ENCODE measurements at regions of chr12 and their contacts with region 1.

Region 1: GRCh38 chr12:68610370-68611093 is at the start of gene RAP1B:
- DNase-seq: peak; percentile 92
- H3K4me3 Mint-ChIP-seq: peak within 1 kb of the TSS; percentile 94
- H3K27ac Mint-ChIP-seq: peak within 1 kb of the TSS; percentile 98
- H3K4me1 Mint-ChIP-seq: peaks cover 37% of the 10 kb centered on the region
- H3K27me3 Mint-ChIP-seq: no peaks in the 10 kb centered on the region
- total RNA-seq, gene RAP1B: 211 to 213 TPM

Region 2: DNA sequence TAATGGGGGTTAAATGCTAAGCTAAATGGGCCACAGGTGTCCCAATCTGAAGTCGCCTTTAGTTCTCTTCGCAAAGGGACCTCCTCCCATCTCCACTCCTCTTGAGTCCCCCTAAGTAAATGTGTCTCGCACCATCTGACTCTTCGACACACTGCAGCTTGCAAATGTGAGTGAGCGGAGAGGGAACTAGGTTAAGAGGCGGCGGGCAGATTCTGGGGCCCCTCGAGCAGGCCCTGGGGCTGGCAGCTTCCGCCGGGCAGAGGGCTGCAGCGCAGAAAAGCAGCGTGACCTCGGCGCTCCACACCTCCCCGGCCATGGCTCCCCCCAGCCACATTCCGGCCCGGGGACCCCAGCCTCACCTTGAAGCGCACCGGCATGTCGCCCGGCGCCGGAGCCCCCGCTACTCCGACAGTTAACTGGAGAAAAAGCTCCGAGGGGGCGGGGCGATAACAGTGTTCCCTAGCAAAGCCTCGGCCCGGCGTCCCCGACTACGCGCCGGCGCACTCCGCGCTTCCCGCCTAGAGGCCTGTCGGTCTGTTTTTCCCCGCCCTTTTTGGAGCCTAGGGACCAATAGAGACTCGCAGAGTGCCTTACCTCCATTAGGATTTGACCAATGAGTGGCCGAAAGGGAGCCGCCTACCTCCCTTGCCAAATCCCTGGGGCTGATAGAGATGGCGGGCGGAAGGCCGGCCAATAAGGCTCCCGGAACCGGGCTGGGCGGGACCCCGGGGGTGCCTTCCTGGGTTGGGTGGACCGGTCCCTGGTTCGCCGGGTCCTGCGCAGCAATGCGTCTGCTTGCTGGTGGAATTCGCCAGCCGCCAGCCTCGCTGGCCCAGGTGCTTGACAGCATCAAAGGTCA is 278.4 kb before region 1 on chr12 and contains the start of gene MDM1:
- CTCF ChIA-PET with region 1: interaction called, 3 read pairs
- POLR2A ChIA-PET with region 1: interaction called, 3 read pairs
- intact Hi-C with region 1: loop called (anchors 1 kb)
- DNase-seq: peak; percentile 97
- H3K4me3 Mint-ChIP-seq: peak within 1 kb of the TSS; percentile 85
- H3K27ac Mint-ChIP-seq: peak within 1 kb of the TSS; percentile 71
- H3K4me1 Mint-ChIP-seq: peaks cover 31% of the 10 kb centered on the region
- H3K27me3 Mint-ChIP-seq: peaks cover 2% of the 10 kb centered on the region
- total RNA-seq, gene MDM1: 13.8 to 15.6 TPM

Region 3: GRCh38 chr12:68342966-68343365 is 267.6 kb before region 1 on chr12:
- CTCF ChIA-PET with region 1: no interaction called
- POLR2A ChIA-PET with region 1: no interaction called
- intact Hi-C with region 1: no loop called
- DNase-seq: no peak
- H3K4me3 Mint-ChIP-seq: no peak overlapping the region
- H3K27ac Mint-ChIP-seq: no peak overlapping the region
- H3K4me1 Mint-ChIP-seq: peaks cover 4% of the 10 kb centered on the region
- H3K27me3 Mint-ChIP-seq: peaks cover 9% of the 10 kb centered on the region

Region 4: DNA sequence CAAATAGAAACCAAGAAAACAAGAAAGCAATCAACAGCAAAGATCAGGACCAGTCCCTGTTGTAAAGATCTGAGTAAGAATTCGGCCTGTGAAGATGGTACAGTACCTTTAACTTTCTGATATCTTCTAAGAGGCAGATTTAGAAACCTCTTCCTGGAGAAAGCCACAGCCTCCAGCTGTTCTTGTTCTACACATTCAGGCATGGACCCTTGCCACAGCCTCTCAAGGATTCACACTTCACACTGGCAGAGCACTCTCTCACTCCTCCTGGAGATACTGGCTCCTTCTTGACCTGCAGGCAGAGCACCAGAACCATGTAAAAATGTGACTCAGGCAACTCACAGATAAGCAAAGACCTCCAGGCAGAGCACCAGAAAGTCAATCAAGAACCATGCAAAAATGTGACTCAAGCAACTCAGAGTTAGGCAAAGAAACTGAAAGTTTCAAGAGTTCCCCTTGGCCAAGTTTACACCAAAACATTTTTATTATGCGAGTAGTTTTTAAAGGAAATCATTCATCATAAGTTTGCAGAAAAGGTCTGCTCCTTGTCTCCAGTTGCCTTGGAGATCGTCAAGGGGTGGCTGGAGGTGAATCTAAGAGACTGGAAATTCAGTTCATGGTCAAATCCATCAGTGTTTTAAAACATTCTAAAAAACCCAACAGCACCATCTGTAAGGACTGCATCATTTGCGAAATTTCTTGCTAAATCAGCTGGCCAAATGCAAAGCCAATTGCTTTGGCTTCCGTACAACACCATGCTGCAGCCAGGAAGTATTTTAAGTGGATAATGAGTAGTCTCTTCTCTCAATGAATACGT is 159.1 kb before region 1 on chr12:
- CTCF ChIA-PET with region 1: interaction called, 4 read pairs
- POLR2A ChIA-PET with region 1: interaction called, 8 read pairs
- intact Hi-C with region 1: loop called (anchors 1 kb)
- DNase-seq: peak; percentile 70
- H3K4me3 Mint-ChIP-seq: peak overlapping the region; percentile 33
- H3K27ac Mint-ChIP-seq: peak overlapping the region; percentile 95
- H3K4me1 Mint-ChIP-seq: peaks cover 85% of the 10 kb centered on the region
- H3K27me3 Mint-ChIP-seq: no peaks in the 10 kb centered on the region

Region 5: DNA sequence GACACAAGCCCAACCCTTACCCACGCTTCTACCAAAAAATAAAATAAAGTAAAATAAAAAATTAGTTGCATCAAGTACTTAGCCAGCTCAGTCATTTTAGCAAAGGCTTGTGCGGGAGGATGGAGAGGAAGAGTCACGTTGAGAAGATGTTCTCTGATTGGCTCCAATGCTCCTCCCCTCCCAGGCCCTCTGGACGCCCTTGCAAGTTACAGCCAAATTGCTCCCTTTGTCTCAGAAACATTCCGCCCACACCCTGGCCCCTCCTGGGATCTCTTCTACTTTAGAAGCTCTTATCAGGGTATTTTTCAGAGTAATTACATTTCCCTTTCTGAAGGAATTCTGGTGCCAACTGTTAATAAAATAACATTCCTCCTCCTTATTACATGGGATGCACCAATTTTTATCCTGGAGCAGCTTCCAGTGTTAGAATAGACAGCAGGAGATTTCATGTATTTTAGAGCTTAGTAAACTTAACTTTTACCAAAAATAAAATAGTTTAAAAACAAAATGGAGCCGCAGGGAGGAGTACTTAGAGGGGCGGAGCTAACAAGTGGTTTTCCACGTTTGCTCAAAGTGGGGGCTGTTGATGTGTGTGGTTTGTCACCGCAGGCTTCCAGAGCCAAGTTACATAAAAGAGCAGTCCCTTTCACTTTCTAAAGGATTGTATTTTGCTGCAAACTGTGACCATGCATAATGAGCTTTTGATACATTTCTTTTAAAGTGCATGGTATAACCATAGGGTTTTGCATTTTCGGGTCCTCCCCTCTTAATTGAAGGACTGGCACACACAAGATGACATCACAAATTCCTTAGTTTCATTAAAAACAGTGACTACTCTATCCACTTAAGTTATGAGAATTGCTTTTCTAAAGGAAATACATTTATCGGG is 71.6 kb before region 1 on chr12:
- CTCF ChIA-PET with region 1: no interaction called
- POLR2A ChIA-PET with region 1: interaction called, 3 read pairs
- intact Hi-C with region 1: loop called (anchors 1 kb)
- DNase-seq: peak; percentile 73
- H3K4me3 Mint-ChIP-seq: peak overlapping the region; percentile 12
- H3K27ac Mint-ChIP-seq: peak overlapping the region; percentile 60
- H3K4me1 Mint-ChIP-seq: peaks cover 43% of the 10 kb centered on the region
- H3K27me3 Mint-ChIP-seq: no peaks in the 10 kb centered on the region

Region 6: DNA sequence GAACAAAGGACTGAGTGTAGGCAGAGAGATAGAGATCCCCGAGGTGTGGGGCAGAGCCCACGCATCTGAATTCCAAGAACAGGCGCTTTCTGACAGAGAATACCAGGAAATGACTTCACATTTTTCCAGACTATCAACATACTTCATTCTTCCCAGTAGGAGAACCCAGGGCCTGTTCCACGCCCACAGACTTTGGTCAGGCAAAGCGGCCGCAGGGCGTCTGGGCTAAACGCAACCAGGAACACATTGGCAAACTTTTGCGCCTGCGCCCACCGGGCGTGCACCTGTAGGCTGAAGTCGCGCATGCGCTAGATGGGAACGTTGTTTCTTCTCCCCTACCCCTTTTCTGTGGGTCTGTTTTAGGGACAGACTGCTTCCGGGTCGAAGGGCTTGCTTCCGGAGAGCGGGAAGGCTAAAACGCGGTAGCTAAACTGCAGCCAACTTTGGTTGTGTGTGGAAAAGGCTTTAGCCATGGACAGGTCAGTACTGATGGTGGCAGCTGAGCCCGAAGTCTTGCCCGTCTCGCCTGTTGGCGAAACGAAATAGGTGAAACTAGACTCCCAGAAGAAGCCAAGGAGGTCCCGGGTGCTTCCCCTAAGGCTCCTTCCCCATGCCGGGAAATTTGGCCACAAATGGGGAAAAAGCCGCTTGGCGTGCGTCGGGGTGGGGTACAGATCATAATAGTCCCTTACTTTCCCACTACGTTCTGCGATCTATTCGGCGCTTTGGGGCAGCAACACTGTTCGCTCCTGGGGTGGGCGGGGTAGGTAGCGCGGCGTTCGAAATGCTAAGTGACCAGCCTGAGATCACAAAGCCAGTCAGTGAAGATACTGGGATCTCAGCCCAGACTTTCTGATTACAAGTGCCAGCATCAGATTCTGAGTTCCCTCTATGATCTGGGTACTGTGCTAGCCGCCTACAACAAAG is 76.3 kb after region 1 on chr12 and contains the start of gene NUP107:
- CTCF ChIA-PET with region 1: no interaction called
- POLR2A ChIA-PET with region 1: no interaction called
- intact Hi-C with region 1: loop called (anchors 1 kb)
- DNase-seq: peak; percentile 98
- H3K4me3 Mint-ChIP-seq: peak within 1 kb of the TSS; percentile 98
- H3K27ac Mint-ChIP-seq: peak within 1 kb of the TSS; percentile 96
- H3K4me1 Mint-ChIP-seq: peaks cover 30% of the 10 kb centered on the region
- H3K27me3 Mint-ChIP-seq: no peaks in the 10 kb centered on the region
- total RNA-seq, gene NUP107: 128 TPM

Region 7: DNA sequence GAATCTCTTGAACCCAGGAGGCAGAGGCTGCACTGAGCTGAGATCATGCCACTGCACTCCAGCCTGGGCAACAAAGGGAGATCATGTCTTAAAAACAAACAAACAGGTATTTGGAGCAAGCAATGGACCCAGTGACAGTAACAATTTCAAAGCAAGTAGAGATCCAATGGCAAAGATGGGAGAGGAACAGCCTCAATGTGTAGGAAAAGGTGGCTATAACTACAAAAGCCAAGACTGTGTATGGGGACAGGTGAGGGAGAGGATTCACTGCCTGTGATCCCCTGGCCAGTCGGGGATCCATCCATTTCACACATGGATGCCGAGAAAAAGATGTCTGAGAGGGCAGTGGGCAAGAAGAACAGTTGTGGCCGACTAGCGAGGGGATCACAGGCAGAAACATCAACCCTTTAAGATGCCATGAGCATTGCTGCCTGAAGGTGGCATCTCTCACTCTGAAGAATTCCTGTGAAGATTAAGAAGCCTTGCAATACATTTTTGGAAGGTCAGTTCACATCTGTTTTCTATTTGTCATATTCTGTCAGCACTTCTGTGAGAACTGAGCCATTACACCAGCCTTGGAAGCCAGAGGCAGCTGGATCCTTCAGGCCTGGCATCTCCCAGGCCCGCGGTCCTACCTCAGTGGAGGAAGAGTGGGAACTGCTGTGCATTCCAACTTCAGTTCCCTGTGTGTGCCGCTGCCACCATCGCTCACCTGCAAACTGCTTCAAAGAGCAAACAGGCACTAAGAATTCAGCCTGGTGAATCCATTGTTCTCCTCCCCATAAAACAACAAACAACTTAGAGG is 805.1 kb after region 1 on chr12:
- CTCF ChIA-PET with region 1: no interaction called
- POLR2A ChIA-PET with region 1: no interaction called
- intact Hi-C with region 1: no loop called
- DNase-seq: peak; percentile 15
- H3K4me3 Mint-ChIP-seq: no peak overlapping the region
- H3K27ac Mint-ChIP-seq: no peak overlapping the region
- H3K4me1 Mint-ChIP-seq: no peaks in the 10 kb centered on the region
- H3K27me3 Mint-ChIP-seq: no peaks in the 10 kb centered on the region

Measured in activated CD4-positive, alpha-beta memory T cell treated with anti-CD3 and anti-CD28 coated beads for 36 hours (primary cell).